Activated B cell treated with CpG ODN at 0.5 μM for 24 hours (primary cell): ENCODE measurements at regions of chr2 and their contacts with region 1.

Region 1: GRCh38 chr2:196277002-196277401 is 105.6 kb upstream of the STK17B start:
- DNase-seq: no peak
- ATAC-seq: peak; percentile 48
- H3K4me3 Mint-ChIP-seq: no peak overlapping the region
- H3K27ac Mint-ChIP-seq: peak overlapping the region; percentile 95
- H3K4me1 Mint-ChIP-seq: peaks cover 41% of the 10 kb centered on the region
- H3K27me3 Mint-ChIP-seq: no peaks in the 10 kb centered on the region
- CTCF ChIP-seq: peak; percentile 34

Region 2: GRCh38 chr2:196101325-196101991 is 175.5 kb before region 1 on chr2:
- CTCF ChIA-PET with region 1: no interaction called
- POLR2A ChIA-PET with region 1: interaction called, 3 read pairs
- intact Hi-C with region 1: loop called (anchors 1 kb)
- DNase-seq: peak; percentile 34
- ATAC-seq: peak; percentile 87
- H3K4me3 Mint-ChIP-seq: peak overlapping the region; percentile 40
- H3K27ac Mint-ChIP-seq: peak overlapping the region; percentile 81
- H3K4me1 Mint-ChIP-seq: peaks cover 77% of the 10 kb centered on the region
- H3K27me3 Mint-ChIP-seq: no peaks in the 10 kb centered on the region
- CTCF ChIP-seq: no peak

Region 3: GRCh38 chr2:196149948-196150347 is 127.1 kb before region 1 on chr2:
- CTCF ChIA-PET with region 1: interaction called, 5 read pairs
- POLR2A ChIA-PET with region 1: interaction called, 5 read pairs
- intact Hi-C with region 1: loop called (anchors 1 kb)
- DNase-seq: no peak
- ATAC-seq: peak; percentile 71
- H3K4me3 Mint-ChIP-seq: peak overlapping the region; percentile 70
- H3K27ac Mint-ChIP-seq: peak overlapping the region; percentile 93
- H3K4me1 Mint-ChIP-seq: peaks cover 78% of the 10 kb centered on the region
- H3K27me3 Mint-ChIP-seq: no peaks in the 10 kb centered on the region
- CTCF ChIP-seq: no peak

Region 4: DNA sequence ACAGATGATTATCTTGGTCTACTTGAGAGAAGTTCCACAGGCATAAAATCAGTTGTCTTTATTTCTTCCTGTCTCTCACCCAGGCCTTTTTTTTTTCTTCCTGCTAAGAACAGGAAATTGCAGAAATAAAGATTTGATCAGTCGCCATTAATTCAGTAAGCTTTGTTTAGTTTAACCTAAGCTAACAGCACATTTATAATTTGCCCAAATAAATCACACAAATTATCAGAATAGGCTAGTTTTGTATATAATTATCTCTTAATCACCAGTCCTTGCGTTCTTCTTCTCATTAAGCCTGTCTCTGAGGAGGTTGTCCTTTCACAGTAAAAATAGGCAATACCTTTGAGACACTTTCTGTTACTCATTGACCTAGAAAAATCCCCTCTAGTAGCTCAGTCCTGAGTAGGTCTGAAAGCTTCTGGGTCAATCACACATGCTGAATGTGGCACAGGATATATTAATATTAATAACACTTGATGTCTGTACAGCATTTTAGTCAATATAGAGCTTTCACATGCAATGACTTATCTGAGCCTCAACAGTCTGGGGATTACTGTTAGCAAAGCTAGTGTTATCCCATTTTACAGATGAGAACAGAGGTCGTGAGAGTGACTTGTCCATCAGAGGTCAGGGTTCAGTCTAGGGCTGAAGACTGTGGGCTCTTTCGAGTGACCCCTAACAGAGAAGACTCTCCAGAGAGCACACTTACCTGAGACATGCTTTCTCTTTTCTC is 94.4 kb before region 1 on chr2:
- CTCF ChIA-PET with region 1: interaction called, 15 read pairs
- POLR2A ChIA-PET with region 1: interaction called, 65 read pairs
- intact Hi-C with region 1: no loop called
- DNase-seq: no peak
- ATAC-seq: peak; percentile 83
- H3K4me3 Mint-ChIP-seq: peak overlapping the region; percentile 67
- H3K27ac Mint-ChIP-seq: peak overlapping the region; percentile 95
- H3K4me1 Mint-ChIP-seq: peaks cover 77% of the 10 kb centered on the region
- H3K27me3 Mint-ChIP-seq: no peaks in the 10 kb centered on the region
- CTCF ChIP-seq: no peak

Region 5: DNA sequence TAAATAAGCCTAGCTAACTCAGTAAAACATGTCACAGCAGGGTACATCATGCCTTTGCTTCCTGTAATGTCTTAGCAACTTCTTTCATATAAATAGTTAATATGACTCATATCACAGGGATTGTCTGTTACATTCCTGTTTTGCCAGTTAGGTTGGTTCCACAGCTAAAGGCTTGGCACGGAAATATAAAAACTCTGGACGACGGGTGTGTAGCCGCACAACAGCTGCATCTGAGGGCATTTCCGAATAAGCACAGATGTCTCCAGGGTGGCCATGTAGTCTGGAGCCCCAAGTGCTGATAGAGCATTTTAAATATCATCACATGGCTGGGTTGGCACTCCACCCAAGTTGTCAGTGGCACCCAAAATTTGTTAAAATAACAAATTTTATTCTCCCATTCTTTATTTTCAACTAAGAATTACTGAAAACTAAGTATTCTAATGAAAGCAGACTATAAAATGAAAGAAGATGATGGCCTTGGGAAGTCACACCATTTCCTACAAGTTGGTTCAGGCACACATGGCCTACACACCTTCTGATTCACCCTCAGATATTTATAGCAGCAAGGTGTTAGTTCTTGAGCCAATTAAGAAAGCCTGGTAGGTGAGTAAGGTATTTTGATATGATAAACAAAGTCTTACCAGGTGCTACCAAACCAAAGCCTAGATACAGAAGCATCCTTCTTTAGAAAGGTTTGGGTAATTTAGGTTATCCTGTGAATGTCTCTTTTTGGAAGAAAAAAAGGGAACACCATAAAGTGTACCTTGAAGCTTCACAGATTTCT is 43.8 kb before region 1 on chr2:
- CTCF ChIA-PET with region 1: interaction called, 10 read pairs
- POLR2A ChIA-PET with region 1: interaction called, 17 read pairs
- intact Hi-C with region 1: no loop called
- DNase-seq: no peak
- ATAC-seq: peak; percentile 15
- H3K4me3 Mint-ChIP-seq: peak overlapping the region; percentile 24
- H3K27ac Mint-ChIP-seq: peak overlapping the region; percentile 91
- H3K4me1 Mint-ChIP-seq: peaks cover 81% of the 10 kb centered on the region
- H3K27me3 Mint-ChIP-seq: no peaks in the 10 kb centered on the region
- CTCF ChIP-seq: no peak

Region 6: DNA sequence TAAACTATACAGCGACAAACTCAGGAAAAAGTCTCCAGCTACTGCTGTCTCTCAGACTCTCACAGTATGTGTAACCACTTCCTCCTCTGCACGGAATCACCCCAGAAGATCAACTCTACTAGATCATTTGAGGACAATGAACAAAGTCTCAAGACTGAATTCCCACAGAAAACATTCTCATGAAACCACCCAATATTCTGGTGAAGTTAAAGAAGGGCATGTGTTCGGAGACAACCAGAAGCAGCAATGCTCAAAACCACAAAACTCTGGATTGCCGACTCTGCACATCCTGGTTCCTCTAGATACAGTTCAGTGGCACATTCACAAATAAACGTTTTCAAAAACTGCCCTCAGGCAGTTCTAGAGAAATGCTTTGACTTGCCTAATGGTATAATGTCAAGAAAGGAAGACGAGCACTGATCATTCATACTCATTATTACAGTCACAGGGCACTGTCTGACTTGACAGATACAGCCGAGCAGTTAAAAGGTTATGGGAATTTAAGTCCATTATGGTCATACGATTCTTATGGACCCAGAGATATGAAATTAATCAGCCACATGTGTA is 13.7 kb before region 1 on chr2:
- CTCF ChIA-PET with region 1: interaction called, 9 read pairs
- POLR2A ChIA-PET with region 1: interaction called, 13 read pairs
- intact Hi-C with region 1: loop called (anchors 1 kb)
- DNase-seq: no peak
- ATAC-seq: peak; percentile 80
- H3K4me3 Mint-ChIP-seq: peak overlapping the region; percentile 71
- H3K27ac Mint-ChIP-seq: peak overlapping the region; percentile 91
- H3K4me1 Mint-ChIP-seq: peaks cover 69% of the 10 kb centered on the region
- H3K27me3 Mint-ChIP-seq: no peaks in the 10 kb centered on the region
- CTCF ChIP-seq: no peak

Region 7: DNA sequence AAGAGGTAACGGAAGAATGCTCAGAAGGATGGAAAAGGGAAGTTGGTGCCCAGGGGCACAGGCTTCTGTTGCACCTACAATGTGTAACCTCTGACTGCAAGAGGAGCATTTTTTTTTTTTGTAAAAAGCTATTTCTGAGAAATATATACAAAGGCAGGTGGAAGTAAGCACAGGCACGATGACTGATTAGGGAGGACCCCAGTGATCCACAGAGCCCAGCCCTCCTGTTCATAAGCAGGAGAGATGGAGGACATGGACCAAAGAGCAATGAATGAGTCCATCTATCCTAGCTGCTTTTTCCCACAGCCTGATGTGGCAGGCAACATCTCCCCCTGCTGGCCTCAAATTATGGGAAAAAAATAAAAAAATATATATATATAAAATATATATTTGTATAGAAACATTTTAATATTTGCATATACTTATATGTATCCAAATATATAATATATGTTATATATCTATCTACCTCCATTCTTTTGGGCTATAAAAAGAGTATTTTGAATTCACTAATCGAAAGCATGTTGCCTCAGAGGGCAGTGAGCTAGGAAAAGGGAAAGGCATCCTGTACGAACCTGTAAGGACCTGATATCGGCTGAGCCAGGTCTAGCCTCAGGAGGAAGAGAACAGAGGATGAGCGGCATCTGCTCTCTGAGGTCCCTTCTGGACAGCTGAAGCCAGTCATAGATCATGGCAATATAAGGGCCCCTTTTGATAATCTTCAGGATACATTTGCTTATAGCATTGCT is 60.4 kb after region 1 on chr2:
- CTCF ChIA-PET with region 1: interaction called, 14 read pairs
- POLR2A ChIA-PET with region 1: interaction called, 7 read pairs
- intact Hi-C with region 1: loop called (anchors 1 kb)
- DNase-seq: no peak
- ATAC-seq: peak; percentile 53
- H3K4me3 Mint-ChIP-seq: no peak overlapping the region
- H3K27ac Mint-ChIP-seq: peak overlapping the region; percentile 5
- H3K4me1 Mint-ChIP-seq: peaks cover 20% of the 10 kb centered on the region
- H3K27me3 Mint-ChIP-seq: no peaks in the 10 kb centered on the region
- CTCF ChIP-seq: no peak

Region 8: GRCh38 chr2:196361606-196362326 is 84.8 kb after region 1 on chr2:
- CTCF ChIA-PET with region 1: no interaction called
- POLR2A ChIA-PET with region 1: no interaction called
- intact Hi-C with region 1: no loop called
- DNase-seq: no peak
- ATAC-seq: no peak
- H3K4me3 Mint-ChIP-seq: no peak overlapping the region
- H3K27ac Mint-ChIP-seq: no peak overlapping the region
- H3K4me1 Mint-ChIP-seq: no peaks in the 10 kb centered on the region
- H3K27me3 Mint-ChIP-seq: peaks cover 17% of the 10 kb centered on the region
- CTCF ChIP-seq: no peak